ENCODE measurements at regions of chr18 and their contacts with region 1.

Region 1: DNA sequence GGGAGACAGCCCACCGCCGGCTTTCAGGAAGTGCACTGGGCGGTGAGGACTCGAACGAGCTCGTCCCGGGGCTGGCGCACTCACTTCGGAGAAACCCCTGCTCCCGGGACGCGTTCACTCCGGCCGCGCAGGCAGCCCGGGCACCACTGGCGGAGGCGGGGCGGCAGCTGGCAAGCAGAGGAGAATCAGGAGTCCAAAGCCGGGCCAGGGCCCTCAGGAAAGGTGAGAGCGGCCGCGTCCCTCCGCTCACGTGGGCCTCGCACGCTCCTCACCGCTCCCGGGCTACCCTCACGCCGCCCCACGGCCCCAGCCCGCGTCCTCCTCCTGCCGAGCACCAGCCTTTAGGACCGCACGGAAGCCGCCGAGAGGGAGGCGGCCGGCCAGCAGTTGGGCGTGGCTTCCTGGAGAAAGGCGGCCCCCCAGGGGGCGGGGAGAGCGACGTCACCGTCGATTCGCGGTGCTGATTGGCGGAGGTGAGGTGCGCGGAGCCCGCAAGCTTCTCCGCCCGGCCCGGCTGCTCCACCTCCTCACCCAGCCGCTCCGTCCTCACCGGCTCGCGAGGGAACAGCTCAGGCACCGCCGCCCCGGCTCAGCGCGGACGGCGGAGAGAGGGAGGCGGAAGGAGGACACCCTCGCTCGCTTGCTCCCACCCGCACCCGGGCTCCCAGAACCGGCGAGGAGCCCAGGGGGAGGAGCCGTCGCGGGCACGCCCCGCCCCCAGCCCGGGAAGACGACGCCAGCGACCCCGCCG is at the start of gene ZCCHC2:
- DNase-seq: peak; percentile 96
- CTCF ChIP-seq: no peak

Region 2: GRCh38 chr18:62510789-62511188 is 11.9 kb before region 1 on chr18:
- CTCF ChIA-PET with region 1: interaction called, 10 read pairs
- POLR2A ChIA-PET with region 1: interaction called, 6 read pairs
- DNase-seq: no peak
- CTCF ChIP-seq: no peak

Measured in GM10248 (cell line).